Activated CD4-positive, alpha-beta memory T cell treated with anti-CD3 and anti-CD28 coated beads for 36 hours (primary cell): ENCODE measurements at regions of chr4 and their contacts with region 1.

Region 1: DNA sequence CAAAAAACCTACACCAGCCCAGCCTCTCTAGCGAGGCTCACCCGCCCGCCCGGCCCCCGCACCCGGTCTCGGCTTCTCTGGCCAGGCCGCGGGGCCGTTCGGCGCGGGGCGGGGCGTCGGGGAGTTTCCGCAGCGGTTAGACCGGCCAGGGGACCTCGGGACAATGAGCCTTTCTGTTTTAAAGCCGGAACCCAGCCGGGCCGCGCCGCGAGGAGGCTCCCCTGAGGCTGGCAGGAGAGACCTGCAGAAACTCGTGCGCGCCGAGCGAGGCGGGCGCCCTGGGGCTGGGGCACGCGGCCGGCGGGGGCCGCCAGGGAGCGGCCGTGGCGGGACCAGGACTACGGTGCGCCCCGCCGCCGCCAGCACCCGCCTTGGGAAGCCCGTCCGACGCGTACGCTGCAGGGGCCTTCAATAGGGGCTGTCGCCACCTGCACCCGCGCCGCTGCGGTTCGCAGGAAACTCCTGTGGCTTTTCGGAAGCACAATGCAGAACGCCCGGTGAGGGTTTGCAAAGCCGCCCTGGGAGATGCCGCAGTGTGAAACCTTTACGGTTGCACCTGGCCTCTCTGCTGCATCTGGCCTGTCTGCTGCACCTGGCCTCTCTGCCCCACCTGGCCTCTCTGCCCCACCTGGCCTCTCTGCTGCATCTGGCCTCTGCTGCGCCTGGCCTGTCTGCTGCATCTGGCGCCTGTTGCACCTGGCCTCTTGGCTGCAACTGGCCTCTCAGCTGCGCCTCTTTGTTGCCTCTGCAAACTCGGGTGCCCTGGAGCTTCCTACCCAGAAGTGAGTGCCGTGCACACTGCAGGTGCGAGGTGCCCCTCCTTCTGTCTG is 63.9 kb downstream of the TRAPPC11 start:
- DNase-seq: peak; percentile 63
- H3K4me3 Mint-ChIP-seq: peak overlapping the region; percentile 69
- H3K27ac Mint-ChIP-seq: no peak overlapping the region
- H3K4me1 Mint-ChIP-seq: peaks cover 11% of the 10 kb centered on the region
- H3K27me3 Mint-ChIP-seq: peaks cover 7% of the 10 kb centered on the region

Region 2: DNA sequence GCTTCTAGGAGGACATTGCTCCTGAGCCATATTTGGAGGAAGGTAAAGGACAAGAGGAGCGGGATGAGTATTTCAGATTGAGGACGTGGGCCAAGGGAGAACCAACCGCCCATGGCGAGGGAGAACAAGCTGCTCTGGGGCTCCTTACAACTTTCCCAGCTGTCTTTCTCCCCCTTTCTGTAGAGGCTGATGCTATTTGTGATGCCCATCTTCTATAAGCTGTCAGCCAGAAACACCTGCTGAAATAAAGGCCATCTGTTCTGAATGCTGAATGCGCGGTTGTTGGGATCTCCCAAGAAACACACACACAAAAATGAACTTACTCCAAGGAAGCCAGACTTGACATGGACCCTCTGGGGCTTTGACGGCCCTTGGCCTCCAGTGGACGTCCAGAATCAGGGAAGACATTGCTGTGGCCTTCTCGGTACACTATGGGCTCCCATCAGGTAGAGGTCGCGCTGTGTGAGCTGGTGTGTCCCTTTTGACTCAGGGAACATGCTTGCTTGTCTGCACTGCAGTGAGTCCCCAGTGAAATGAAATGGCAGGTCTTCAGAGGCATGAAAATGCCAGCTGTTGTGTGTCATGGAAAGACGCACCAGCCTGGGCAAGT is 94.9 kb before region 1 on chr4:
- CTCF ChIA-PET with region 1: no interaction called
- POLR2A ChIA-PET with region 1: no interaction called
- intact Hi-C with region 1: loop called (anchors 5 kb)
- DNase-seq: no peak
- H3K4me3 Mint-ChIP-seq: no peak overlapping the region
- H3K27ac Mint-ChIP-seq: no peak overlapping the region
- H3K4me1 Mint-ChIP-seq: no peaks in the 10 kb centered on the region
- H3K27me3 Mint-ChIP-seq: peaks cover 2% of the 10 kb centered on the region

Region 3: DNA sequence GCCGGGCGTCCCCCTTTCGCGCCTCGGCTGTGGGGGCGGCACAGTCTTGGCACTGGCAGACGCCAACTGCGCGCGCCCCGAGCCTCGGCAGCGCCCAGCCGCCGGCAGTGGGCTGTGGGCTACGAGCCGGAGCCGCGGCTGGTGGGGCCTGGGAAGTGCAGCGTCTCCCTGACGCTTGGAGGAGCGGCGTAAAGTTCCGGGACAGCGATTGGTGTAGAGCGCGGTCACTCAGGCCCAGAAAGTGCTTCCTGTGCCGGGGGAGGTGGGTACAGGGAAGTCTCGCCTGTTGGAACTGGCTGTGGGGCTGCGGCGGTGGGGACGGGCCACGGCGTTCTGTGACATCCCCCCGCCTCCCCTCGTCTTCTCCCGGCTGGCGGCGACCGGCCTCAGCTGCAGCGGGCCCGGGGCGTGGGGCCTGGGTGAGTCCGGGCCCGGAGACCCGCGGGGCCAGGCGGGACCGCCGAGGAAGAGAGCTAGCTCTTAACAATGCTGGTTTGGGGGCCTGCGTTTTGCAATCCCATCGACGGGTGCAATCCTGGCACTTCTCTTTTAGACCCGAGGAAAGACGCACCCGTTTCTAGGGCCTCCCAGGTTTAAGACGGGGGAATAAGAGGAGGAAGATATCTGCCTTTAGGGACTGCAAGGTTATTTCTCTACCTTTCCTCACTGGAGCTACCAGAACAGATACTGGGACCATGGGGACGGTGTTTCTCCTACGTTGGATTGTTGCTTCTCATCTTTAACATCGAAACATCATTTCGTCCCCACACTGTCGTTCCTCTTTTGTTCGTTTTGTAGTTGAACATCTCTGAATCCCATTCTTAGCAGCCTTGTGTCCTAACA is 63.7 kb before region 1 on chr4 and contains the starts of genes RWDD4 and TRAPPC11:
- CTCF ChIA-PET with region 1: no interaction called
- POLR2A ChIA-PET with region 1: no interaction called
- intact Hi-C with region 1: loop called (anchors 2 kb)
- DNase-seq: peak; percentile 98
- H3K4me3 Mint-ChIP-seq: peak within 1 kb of the TSS; percentile 85
- H3K27ac Mint-ChIP-seq: peak within 1 kb of the TSS; percentile 80
- H3K4me1 Mint-ChIP-seq: peaks cover 35% of the 10 kb centered on the region
- H3K27me3 Mint-ChIP-seq: no peaks in the 10 kb centered on the region
- total RNA-seq, gene RWDD4: 19.4 to 19.8 TPM
- total RNA-seq, gene TRAPPC11: 29.7 to 30.2 TPM

Region 4: DNA sequence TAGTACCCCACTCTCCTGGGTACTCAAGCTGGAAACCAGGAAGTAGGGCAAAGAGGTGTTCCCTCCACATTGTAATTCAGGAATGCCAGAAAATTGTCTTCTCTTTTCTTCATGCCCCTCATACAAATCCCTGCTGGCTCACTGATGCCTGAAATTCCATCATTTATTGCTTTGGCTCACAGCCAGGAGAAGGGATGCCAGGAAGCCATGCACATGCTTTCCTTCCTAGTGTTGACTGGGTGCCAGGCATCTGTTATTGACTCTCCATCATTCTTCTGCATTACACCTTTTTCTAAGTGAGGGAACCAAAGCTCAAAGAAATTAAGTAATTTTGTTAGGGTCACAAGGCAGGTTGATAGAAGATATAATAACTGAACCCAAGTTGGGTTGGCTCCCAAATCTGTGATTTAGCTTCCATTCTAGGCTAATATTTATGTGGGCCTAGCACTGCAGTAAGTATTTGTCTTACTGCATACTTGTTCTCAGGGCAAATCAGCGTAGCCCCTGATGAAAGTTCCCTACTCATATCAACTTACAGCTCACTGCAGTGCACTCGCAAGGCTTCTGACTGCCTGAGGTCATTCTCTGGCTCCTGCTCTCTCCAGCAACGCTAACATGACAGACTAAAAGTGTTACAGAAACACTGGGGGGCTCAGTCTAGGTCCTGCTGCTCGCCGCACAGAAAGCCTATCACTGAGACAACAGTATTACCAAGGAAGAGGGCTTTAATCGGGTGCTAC is 25.2 kb after region 1 on chr4:
- CTCF ChIA-PET with region 1: no interaction called
- POLR2A ChIA-PET with region 1: no interaction called
- intact Hi-C with region 1: no loop called
- DNase-seq: no peak
- H3K4me3 Mint-ChIP-seq: no peak overlapping the region
- H3K27ac Mint-ChIP-seq: no peak overlapping the region
- H3K4me1 Mint-ChIP-seq: no peaks in the 10 kb centered on the region
- H3K27me3 Mint-ChIP-seq: peaks cover 3% of the 10 kb centered on the region

Region 5: DNA sequence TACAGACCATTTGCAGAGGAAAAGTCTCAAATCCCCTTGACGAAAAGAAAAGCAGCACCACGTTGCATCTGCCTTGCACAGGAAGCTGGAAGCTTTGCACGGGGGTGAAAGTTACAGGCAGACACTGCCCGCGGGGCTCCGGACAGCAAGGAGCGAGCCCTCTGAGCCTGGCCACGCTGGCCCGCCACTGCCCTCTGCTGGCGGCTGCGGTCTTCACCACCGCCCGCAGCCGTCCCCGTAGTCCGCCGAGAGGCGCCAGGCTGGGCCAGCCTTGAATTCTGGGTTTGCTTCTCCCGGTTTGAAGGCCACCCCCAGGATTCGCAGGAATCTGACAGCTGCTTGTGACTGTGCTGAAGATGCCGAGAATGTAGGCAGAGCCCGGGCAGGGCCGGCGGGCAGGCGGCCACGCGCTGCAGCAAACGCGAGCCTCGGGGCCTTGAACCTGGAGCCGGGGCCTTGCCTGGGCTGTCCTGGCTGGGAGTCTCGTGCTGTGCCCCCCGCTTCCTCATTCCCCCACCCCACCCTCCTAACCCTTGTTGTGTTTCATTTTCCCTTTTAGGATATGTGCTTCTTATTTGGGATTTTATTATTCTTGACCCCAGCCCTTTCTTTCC is 445.6 kb after region 1 on chr4:
- CTCF ChIA-PET with region 1: no interaction called
- POLR2A ChIA-PET with region 1: no interaction called
- intact Hi-C with region 1: loop called (anchors 10 kb)
- DNase-seq: peak; percentile 70
- H3K4me3 Mint-ChIP-seq: no peak overlapping the region
- H3K27ac Mint-ChIP-seq: no peak overlapping the region
- H3K4me1 Mint-ChIP-seq: peaks cover 2% of the 10 kb centered on the region
- H3K27me3 Mint-ChIP-seq: peaks cover 44% of the 10 kb centered on the region